ENCODE measurements at regions of chr2 and their contacts with region 1.

Region 1: GRCh38 chr2:18520451-18521425 is 39.7 kb downstream of the RDH14 start:
- DNase-seq: peak; percentile 81
- H3K4me3 Mint-ChIP-seq: no peak overlapping the region
- H3K27ac Mint-ChIP-seq: no peak overlapping the region
- H3K4me1 Mint-ChIP-seq: no peaks in the 10 kb centered on the region
- H3K27me3 Mint-ChIP-seq: peaks cover 25% of the 10 kb centered on the region

Region 2: GRCh38 chr2:18531194-18531593 is 10.5 kb after region 1 on chr2:
- CTCF ChIA-PET with region 1: interaction called, 25 read pairs
- DNase-seq: no peak
- H3K4me3 Mint-ChIP-seq: no peak overlapping the region
- H3K27ac Mint-ChIP-seq: no peak overlapping the region
- H3K4me1 Mint-ChIP-seq: no peaks in the 10 kb centered on the region
- H3K27me3 Mint-ChIP-seq: peaks cover 5% of the 10 kb centered on the region

Region 3: GRCh38 chr2:18724371-18725145 is 203.8 kb after region 1 on chr2:
- CTCF ChIA-PET with region 1: no interaction called
- DNase-seq: no peak
- H3K4me3 Mint-ChIP-seq: no peak overlapping the region
- H3K27ac Mint-ChIP-seq: no peak overlapping the region
- H3K4me1 Mint-ChIP-seq: no peaks in the 10 kb centered on the region
- H3K27me3 Mint-ChIP-seq: no peaks in the 10 kb centered on the region

Region 4: DNA sequence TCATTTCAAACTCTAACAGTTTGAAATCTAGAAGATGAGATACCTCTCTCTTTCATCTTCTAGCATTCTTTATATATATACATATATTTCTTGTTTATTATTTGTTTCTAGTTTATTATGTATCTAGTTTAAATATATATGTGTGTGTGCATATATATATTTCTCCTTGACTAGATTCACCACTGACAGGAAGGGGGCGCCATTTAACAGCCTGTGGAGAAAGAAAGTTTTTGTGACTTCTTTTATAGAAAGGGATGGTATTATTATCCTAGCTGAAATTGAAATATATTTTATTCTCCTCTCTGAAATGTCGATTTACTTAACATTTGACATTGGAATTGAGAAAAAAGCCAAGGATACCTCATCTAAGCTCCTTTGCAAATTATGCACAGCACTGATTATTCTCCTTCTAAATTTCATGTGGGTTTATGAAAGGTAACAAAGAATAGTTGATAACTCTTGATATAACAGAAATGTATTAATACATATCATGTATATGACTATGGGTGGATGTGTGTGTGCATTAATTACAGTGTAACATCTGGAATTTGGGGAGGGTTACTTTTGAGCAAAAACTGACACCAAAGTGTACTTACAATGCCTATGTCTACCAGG is 229.3 kb after region 1 on chr2:
- CTCF ChIA-PET with region 1: interaction called, 10 read pairs
- DNase-seq: peak; percentile 57
- H3K4me3 Mint-ChIP-seq: no peak overlapping the region
- H3K27ac Mint-ChIP-seq: no peak overlapping the region
- H3K4me1 Mint-ChIP-seq: no peaks in the 10 kb centered on the region
- H3K27me3 Mint-ChIP-seq: no peaks in the 10 kb centered on the region

Region 5: GRCh38 chr2:19863303-19864041 is 1342.7 kb after region 1 on chr2:
- CTCF ChIA-PET with region 1: interaction called, 16 read pairs
- DNase-seq: peak; percentile 74
- H3K4me3 Mint-ChIP-seq: no peak overlapping the region
- H3K27ac Mint-ChIP-seq: no peak overlapping the region
- H3K4me1 Mint-ChIP-seq: peaks cover 11% of the 10 kb centered on the region
- H3K27me3 Mint-ChIP-seq: peaks cover 25% of the 10 kb centered on the region